A673 (cell line): ENCODE measurements at regions of chr2 and their contacts with region 1.

Region 1: GRCh38 chr2:147449323-147449991 is 395.4 kb upstream of the ACVR2A start:
- DNase-seq: peak; percentile 70
- H3K4me3 ChIP-seq: no peak overlapping the region
- H3K27ac ChIP-seq: peak overlapping the region; percentile 92
- H3K4me1 ChIP-seq: peaks cover 61% of the 10 kb centered on the region
- H3K27me3 ChIP-seq: no peaks in the 10 kb centered on the region
- CTCF ChIP-seq: no peak

Region 2: GRCh38 chr2:146927080-146927711 is 522.3 kb before region 1 on chr2:
- CTCF ChIA-PET with region 1: no interaction called
- POLR2A ChIA-PET with region 1: no interaction called
- intact Hi-C with region 1: loop called (anchors 5 kb)
- DNase-seq: peak; percentile 73
- H3K4me3 ChIP-seq: no peak overlapping the region
- H3K27ac ChIP-seq: no peak overlapping the region
- H3K4me1 ChIP-seq: no peaks in the 10 kb centered on the region
- H3K27me3 ChIP-seq: no peaks in the 10 kb centered on the region
- CTCF ChIP-seq: peak; percentile 73

Region 3: DNA sequence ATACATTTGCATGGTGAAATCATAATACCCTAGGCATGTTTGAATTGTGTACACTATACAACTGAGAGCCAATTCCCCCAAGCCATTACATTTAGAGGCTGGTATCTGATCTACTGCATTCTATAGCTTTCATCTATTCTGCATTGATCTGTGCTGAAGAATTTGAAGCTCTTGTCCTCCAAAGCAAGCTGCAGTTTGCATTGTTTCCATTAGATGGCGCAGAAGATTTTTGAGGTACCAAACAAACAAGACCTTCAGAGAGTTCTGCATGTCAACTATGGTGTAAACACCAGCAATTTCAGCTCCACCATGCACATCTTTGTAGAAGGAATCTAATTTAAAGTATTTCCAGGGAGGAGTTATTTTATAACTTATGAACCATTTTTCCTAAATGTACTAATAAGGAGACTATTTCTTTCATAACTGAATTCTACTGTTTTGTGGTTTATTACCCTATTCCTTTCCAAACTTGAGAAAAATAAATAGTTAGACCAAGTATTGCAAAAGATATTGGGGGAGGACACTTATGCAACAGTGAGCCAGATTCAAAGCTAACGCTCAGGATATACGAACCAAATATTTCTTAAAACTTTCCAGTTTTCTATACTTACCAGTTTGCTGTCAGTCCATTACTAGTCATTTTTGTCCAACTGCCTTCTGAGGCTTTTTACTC is 366.5 kb before region 1 on chr2:
- CTCF ChIA-PET with region 1: no interaction called
- POLR2A ChIA-PET with region 1: no interaction called
- intact Hi-C with region 1: loop called (anchors 5 kb)
- DNase-seq: peak; percentile 83
- H3K4me3 ChIP-seq: no peak overlapping the region
- H3K27ac ChIP-seq: no peak overlapping the region
- H3K4me1 ChIP-seq: no peaks in the 10 kb centered on the region
- H3K27me3 ChIP-seq: no peaks in the 10 kb centered on the region
- CTCF ChIP-seq: peak; percentile 92

Region 4: GRCh38 chr2:147099837-147100720 is 349.4 kb before region 1 on chr2:
- CTCF ChIA-PET with region 1: no interaction called
- POLR2A ChIA-PET with region 1: no interaction called
- intact Hi-C with region 1: no loop called
- DNase-seq: no peak
- H3K4me3 ChIP-seq: no peak overlapping the region
- H3K27ac ChIP-seq: no peak overlapping the region
- H3K4me1 ChIP-seq: no peaks in the 10 kb centered on the region
- H3K27me3 ChIP-seq: no peaks in the 10 kb centered on the region
- CTCF ChIP-seq: no peak

Region 5: DNA sequence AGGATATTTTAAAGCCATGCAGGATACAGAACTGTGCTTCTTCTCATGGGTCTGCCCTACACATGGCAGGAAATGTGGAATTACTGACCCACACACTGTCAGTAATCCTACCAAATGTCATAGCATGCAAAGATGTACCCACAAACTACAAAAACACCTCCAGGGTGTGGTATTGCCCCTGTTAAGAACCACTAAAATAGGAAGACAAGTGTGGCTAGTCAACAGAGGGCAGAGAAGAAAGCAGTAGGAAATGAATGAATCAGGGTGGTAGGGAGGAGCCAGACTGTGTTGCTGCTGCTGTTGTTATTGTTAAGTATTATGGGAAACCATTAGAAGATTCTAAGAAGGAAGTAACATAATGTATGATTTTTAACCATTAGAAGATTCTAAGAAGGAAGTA is 161.3 kb before region 1 on chr2:
- CTCF ChIA-PET with region 1: no interaction called
- POLR2A ChIA-PET with region 1: no interaction called
- intact Hi-C with region 1: no loop called
- DNase-seq: no peak
- H3K4me3 ChIP-seq: no peak overlapping the region
- H3K27ac ChIP-seq: no peak overlapping the region
- H3K4me1 ChIP-seq: no peaks in the 10 kb centered on the region
- H3K27me3 ChIP-seq: no peaks in the 10 kb centered on the region
- CTCF ChIP-seq: no peak

Region 6: GRCh38 chr2:147739508-147739907 is 290.1 kb after region 1 on chr2:
- CTCF ChIA-PET with region 1: no interaction called
- POLR2A ChIA-PET with region 1: no interaction called
- intact Hi-C with region 1: loop called (anchors 2 kb)
- DNase-seq: peak; percentile 85
- H3K4me3 ChIP-seq: no peak overlapping the region
- H3K27ac ChIP-seq: no peak overlapping the region
- H3K4me1 ChIP-seq: peaks cover 4% of the 10 kb centered on the region
- H3K27me3 ChIP-seq: no peaks in the 10 kb centered on the region
- CTCF ChIP-seq: no peak

Region 7: GRCh38 chr2:147843864-147844696 is 394.6 kb after region 1 on chr2:
- CTCF ChIA-PET with region 1: no interaction called
- POLR2A ChIA-PET with region 1: no interaction called
- intact Hi-C with region 1: loop called (anchors 2 kb)
- DNase-seq: peak; percentile 95
- H3K4me3 ChIP-seq: peak overlapping the region; percentile 75
- H3K27ac ChIP-seq: peak overlapping the region; percentile 95
- H3K4me1 ChIP-seq: peaks cover 14% of the 10 kb centered on the region
- H3K27me3 ChIP-seq: no peaks in the 10 kb centered on the region
- CTCF ChIP-seq: 0 out of 2 replicates have a peak, but pooled peaks have one; percentile 18